Right cardiac atrium (tissue), 5 donors: ENCODE measurements at regions of chr4 and their contacts with region 1.

Region 1: DNA sequence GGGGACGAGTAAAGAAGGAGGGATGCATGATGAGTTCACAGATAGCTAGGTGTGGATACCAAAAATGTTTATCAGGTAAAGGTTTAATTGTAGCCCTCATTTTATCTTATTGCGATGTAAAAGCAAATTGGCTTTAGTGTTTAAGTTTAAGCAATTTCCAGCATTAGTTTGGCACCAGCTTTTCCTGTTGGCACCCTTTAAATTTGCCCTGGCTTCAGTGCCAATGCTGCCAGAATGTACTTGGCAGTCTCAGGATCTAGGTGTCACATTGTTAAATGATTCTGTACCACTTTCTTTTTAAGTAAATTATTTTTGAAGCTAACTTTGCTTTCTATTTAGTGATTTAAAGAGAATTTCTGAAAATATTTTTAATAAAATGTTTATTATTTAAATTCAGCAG is 681.8 kb downstream of the PCDH18 start:
- DNase-seq: no peak
- ATAC-seq: no peak
- H3K4me3 ChIP-seq: peak overlapping the region; percentile 15
- H3K27ac ChIP-seq: no peak overlapping the region
- H3K4me1 ChIP-seq: no peaks in the 10 kb centered on the region
- H3K27me3 ChIP-seq: no peaks in the 10 kb centered on the region

Region 2: DNA sequence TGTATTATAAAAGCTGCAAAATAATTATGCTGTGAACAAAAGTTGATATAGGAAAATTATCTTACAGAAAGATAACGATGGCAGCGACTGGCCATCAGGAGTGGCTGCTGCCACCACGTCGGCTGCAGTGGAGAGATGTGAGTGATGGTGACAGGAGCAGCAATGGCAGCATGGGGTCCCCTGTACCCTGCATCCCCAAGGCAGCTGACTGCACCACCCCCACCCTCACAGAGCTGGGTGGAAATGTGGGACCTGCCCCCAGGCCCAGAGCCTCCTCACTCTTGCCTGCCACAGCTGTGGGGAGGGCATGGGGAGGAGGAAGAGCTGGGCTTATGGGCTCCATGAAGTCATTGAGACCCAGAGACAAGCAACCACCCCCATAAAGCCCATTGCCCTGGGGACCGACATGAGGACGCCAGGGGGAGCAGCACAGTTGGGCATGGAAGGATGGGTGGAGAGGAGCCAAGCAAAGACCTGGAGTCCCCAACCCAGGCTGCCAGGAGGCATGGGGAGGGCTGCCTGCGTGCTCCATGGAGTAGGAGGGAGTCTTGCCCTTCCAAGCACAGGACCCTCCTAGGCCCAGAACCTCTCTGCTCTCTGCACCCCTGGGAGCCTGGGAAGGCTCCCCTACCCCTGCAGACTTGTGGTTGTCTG is 408.7 kb before region 1 on chr4:
- intact Hi-C with region 1: loop called in 1 of 4 experiments (anchors 10 kb)
- DNase-seq: no peak
- ATAC-seq: peak in 1 of 2 donors; percentile 14
- H3K4me3 ChIP-seq: no peak overlapping the region
- H3K27ac ChIP-seq: no peak overlapping the region
- H3K4me1 ChIP-seq: no peaks in the 10 kb centered on the region
- H3K27me3 ChIP-seq: no peaks in the 10 kb centered on the region

Region 3: GRCh38 chr4:136935305-136935704 is 84.9 kb after region 1 on chr4:
- intact Hi-C with region 1: no loop called
- DNase-seq: no peak
- ATAC-seq: no peak
- H3K4me3 ChIP-seq: no peak overlapping the region
- H3K27ac ChIP-seq: no peak overlapping the region
- H3K4me1 ChIP-seq: no peaks in the 10 kb centered on the region
- H3K27me3 ChIP-seq: no peaks in the 10 kb centered on the region